Colonic mucosa (tissue), 4 donors: ENCODE measurements at regions of chr11 and their contacts with region 1.

Region 1: GRCh38 chr11:87281496-87281895 is 243.8 kb downstream of the TMEM135 start:
- DNase-seq: no peak
- H3K4me3 ChIP-seq: no peak overlapping the region
- H3K27ac ChIP-seq: no peak overlapping the region
- H3K4me1 ChIP-seq: no peaks in the 10 kb centered on the region
- H3K27me3 ChIP-seq: no peaks in the 10 kb centered on the region
- CTCF ChIP-seq: no peak

Region 2: DNA sequence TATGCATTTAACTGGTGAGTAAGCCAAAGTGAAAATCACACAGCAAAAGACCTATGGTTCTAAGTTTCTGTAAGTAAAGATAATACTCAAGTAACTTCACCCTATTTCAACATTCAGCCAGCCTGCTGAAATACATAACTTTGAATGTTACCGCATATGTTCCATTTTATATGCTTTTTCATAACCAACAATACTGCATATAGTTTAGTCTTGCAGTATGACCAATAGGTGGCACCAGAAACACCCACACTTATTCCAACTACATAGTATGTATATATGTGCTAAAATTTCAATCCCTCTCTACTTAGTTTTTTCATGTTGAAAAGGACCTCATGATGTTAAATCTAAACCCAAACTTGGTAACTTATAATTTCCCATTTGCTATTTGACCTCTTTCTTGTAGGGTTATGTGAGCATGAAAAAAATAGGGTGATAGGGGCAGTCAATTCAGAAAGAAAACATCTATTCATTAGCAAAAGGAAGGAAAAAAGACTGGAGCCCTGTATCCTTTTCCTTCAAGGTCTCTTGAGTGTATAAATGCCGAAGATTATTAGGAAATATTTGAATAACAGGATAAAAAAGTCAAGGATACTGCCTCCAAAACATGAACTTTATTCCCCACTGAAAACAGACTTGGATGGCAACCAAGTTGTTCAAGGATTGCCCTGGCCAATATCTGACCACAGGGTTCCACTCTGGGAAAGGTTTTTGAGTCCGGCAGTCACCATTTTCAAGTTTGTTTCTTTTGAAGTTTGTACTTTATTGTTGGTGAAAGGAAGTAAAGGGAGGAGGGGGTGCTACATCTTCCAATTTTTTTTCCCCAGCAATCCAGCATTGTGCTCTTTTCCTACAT is 302.5 kb before region 1 on chr11:
- intact Hi-C with region 1: loop called (anchors 10 kb)
- DNase-seq: no peak
- H3K4me3 ChIP-seq: no peak overlapping the region
- H3K27ac ChIP-seq: no peak overlapping the region
- H3K4me1 ChIP-seq: no peaks in the 10 kb centered on the region
- H3K27me3 ChIP-seq: no peaks in the 10 kb centered on the region
- CTCF ChIP-seq: peak; percentile 53

Region 3: DNA sequence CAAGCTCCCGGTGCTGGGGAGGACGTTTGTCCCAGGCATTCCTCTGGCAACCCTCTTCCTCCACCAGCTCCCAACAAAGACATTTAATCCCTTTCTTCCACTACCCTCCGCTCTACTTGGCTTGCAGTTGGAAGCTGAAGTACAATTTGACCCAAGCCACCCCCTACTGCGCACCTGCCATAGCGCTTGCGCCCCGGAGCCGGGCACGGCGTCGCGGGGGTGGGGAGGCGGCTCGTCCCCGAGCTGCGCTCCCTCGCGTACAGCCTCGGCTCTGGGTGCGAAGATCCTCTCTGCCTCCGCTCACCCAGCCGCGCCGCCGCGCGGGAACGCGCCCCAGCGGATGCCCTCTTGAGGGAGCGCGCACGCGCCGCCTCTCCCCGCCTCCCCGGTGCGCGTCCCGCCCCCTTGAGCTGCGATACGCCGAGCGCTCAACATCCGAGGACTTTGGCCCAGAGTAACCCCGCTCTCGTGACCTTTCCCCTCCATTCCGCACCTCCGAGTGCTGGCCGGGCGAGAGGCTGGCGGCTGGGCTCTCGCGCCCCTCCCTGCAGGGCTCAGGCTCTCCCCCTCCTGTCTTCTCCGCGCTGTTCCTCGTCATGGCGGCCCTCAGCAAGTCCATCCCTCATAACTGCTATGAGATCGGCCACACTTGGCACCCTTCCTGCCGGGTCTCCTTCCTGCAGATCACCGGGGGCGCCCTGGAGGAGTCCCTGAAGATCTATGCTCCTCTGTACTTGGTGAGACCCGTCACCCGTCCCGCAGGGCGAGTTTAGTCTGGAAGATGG is 243.9 kb before region 1 on chr11 and contains the start of gene TMEM135:
- intact Hi-C with region 1: no loop called
- DNase-seq: peak; percentile 98
- H3K4me3 ChIP-seq: peak within 1 kb of the TSS; percentile 62
- H3K27ac ChIP-seq: peak within 1 kb of the TSS; percentile 92
- H3K4me1 ChIP-seq: peaks cover 13% of the 10 kb centered on the region
- H3K27me3 ChIP-seq: no peaks in the 10 kb centered on the region
- CTCF ChIP-seq: no peak
- total RNA-seq, gene TMEM135: 28.8 to 41.4 TPM